BJ (cell line): ENCODE measurements at regions of chr17 and their contacts with region 1.

Region 1: DNA sequence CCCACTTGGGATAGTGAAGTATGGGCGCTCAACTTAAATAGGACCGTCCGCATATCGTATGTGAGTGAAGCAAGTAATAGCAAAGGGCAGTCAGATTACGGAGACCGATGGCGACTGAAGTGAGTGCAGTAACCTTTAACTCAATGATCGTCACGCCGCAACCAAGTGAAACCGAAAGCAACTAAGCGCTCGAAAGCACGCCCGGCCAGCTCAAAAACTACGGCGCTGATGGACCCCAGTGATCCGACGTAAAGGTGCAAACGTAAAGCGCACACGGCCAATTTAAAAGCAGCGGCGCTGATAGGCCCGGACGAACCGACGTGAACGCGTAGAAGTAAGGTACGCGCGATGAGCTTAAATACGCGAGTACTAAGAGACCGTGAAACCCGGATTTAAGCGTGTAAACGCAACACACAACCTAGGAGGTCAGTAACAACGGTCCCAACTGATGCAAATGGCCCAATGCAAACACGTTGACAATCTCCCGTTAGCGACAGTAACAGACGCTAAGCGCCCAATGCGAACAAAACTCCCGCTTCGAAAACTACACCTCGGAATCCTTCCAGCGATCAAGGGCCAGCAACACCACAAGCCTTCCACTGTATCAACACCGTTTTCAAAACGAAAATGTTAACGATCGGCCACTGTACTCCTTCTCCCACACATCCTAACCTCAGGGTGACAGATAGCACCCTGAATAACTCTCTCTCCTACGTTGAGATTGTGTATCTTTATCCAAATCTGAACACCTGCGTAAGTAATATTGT is 37.9 kb upstream of the ARL4D start:
- DNase-seq: peak; percentile 89
- H3K4me3 ChIP-seq: peak overlapping the region; percentile 51
- H3K27me3 ChIP-seq: no peaks in the 10 kb centered on the region
- CTCF ChIP-seq: no peak

Region 2: GRCh38 chr17:43327834-43328420 is 33.0 kb before region 1 on chr17:
- CTCF ChIA-PET with region 1: no interaction called
- POLR2A ChIA-PET with region 1: no interaction called
- DNase-seq: no peak
- H3K4me3 ChIP-seq: no peak overlapping the region
- H3K27me3 ChIP-seq: no peaks in the 10 kb centered on the region
- CTCF ChIP-seq: no peak

Region 3: DNA sequence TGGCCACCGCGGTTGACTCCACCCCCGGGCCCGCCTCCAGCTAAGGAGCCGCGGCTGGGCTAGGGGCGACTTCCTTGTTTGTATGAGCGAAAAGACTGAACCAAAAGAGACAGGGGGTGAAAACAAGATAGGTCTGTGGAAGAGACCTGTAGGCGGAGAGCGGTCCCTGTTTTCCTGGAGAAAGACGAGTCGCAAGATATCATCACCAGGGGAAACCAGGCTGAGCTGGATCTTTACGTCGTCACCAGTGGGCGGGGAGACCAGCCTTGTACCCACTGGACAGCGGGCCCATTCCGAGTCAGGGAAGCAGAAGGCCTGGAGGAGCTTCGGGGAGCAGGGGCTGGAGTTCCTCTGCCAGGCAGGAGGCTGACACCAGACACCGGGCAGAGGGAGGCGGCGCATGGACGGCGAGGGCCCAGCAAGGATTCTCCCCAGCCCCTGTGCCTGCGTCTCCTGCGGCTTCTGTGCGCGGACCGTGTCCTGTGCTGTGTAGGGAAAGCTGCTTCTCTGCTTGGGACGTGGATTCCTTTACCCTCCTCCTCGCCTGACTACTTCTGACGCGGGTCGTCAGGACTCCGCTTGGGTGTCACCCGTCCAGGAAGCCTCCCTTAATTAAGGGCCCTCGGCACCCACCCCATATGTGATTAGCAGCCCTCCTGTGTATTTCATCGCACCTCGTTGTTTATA is 27.6 kb after region 1 on chr17:
- CTCF ChIA-PET with region 1: interaction called, 5 read pairs
- POLR2A ChIA-PET with region 1: interaction called, 19 read pairs
- DNase-seq: peak; percentile 72
- H3K4me3 ChIP-seq: peak overlapping the region; percentile 61
- H3K27me3 ChIP-seq: no peaks in the 10 kb centered on the region
- CTCF ChIP-seq: no peak

Region 4: GRCh38 chr17:43418441-43419374 is 57.8 kb after region 1 on chr17:
- CTCF ChIA-PET with region 1: no interaction called
- POLR2A ChIA-PET with region 1: no interaction called
- DNase-seq: peak; percentile 76
- H3K4me3 ChIP-seq: no peak overlapping the region
- H3K27me3 ChIP-seq: no peaks in the 10 kb centered on the region
- CTCF ChIP-seq: no peak; the same call in 1 of the 2 replicates

Region 5: GRCh38 chr17:43713494-43714162 is 352.7 kb after region 1 on chr17:
- CTCF ChIA-PET with region 1: no interaction called
- POLR2A ChIA-PET with region 1: interaction called, 16 read pairs
- DNase-seq: no peak
- H3K4me3 ChIP-seq: peak overlapping the region; percentile 44
- H3K27me3 ChIP-seq: no peaks in the 10 kb centered on the region
- CTCF ChIP-seq: no peak